CD8-positive, alpha-beta memory T cell (primary cell): ENCODE measurements at regions of chr12 and their contacts with region 1.

Region 1: GRCh38 chr12:14937689-14938088 is 648 bp downstream of the ERP27 start:
- DNase-seq: peak in 1 of 5 donors; percentile 36
- H3K4me3 ChIP-seq: no peak overlapping the region
- H3K4me3 Mint-ChIP-seq: peak overlapping the region in 1 of 7 donors; percentile 19
- H3K27ac ChIP-seq: no peak overlapping the region
- H3K27ac Mint-ChIP-seq: peak overlapping the region; percentile 43 to 97 (median 92)
- H3K4me1 ChIP-seq: peaks cover 22% of the 10 kb centered on the region
- H3K4me1 Mint-ChIP-seq: peaks cover 42 to 69% (median 60%) of the 10 kb centered on the region in 3 donors
- H3K27me3 ChIP-seq: no peaks in the 10 kb centered on the region
- H3K27me3 Mint-ChIP-seq: no peaks in the 10 kb centered on the region

Region 2: GRCh38 chr12:14473707-14474287 is 463.9 kb before region 1 on chr12:
- CTCF ChIA-PET with region 1: no interaction called
- POLR2A ChIA-PET with region 1: interaction called, 13 read pairs
- DNase-seq: peak in 2 of 5 donors; percentile 14 to 25
- H3K4me3 ChIP-seq: no peak overlapping the region
- H3K4me3 Mint-ChIP-seq: no peak overlapping the region
- H3K27ac ChIP-seq: no peak overlapping the region
- H3K27ac Mint-ChIP-seq: peak overlapping the region in 1 of 8 donors; percentile 69
- H3K4me1 ChIP-seq: no peaks in the 10 kb centered on the region
- H3K4me1 Mint-ChIP-seq: peaks cover 9 to 35% (median 13%) of the 10 kb centered on the region in 3 donors
- H3K27me3 ChIP-seq: no peaks in the 10 kb centered on the region
- H3K27me3 Mint-ChIP-seq: peaks cover 0 to 2% of the 10 kb centered on the region in 2 donors

Region 3: GRCh38 chr12:14948672-14949071 is 11.0 kb after region 1 on chr12:
- CTCF ChIA-PET with region 1: interaction called, 10 read pairs
- POLR2A ChIA-PET with region 1: interaction called, 9 read pairs
- DNase-seq: peak; percentile 32 to 81 (median 67)
- H3K4me3 ChIP-seq: peak overlapping the region; percentile 41
- H3K4me3 Mint-ChIP-seq: peak overlapping the region; percentile 72 to 87 (median 85)
- H3K27ac ChIP-seq: peak overlapping the region; percentile 9
- H3K27ac Mint-ChIP-seq: peak overlapping the region; percentile 95 to 100 (median 98)
- H3K4me1 ChIP-seq: peaks cover 94% of the 10 kb centered on the region
- H3K4me1 Mint-ChIP-seq: peaks cover 87 to 95% (median 94%) of the 10 kb centered on the region in 3 donors
- H3K27me3 ChIP-seq: no peaks in the 10 kb centered on the region
- H3K27me3 Mint-ChIP-seq: peaks cover 0 to under 1% of the 10 kb centered on the region in 2 donors

Region 4: GRCh38 chr12:14960548-14961465 is 23.1 kb after region 1 on chr12:
- CTCF ChIA-PET with region 1: interaction called, 14 read pairs
- POLR2A ChIA-PET with region 1: interaction called, 6 read pairs
- DNase-seq: peak; percentile 33 to 81 (median 72)
- H3K4me3 ChIP-seq: peak overlapping the region; percentile 94
- H3K4me3 Mint-ChIP-seq: peak overlapping the region; percentile 96 to 100 (median 98)
- H3K27ac ChIP-seq: peak overlapping the region; percentile 85
- H3K27ac Mint-ChIP-seq: peak overlapping the region; percentile 92 to 100 (median 99)
- H3K4me1 ChIP-seq: peaks cover 57% of the 10 kb centered on the region
- H3K4me1 Mint-ChIP-seq: peaks cover 61 to 80% (median 66%) of the 10 kb centered on the region in 3 donors
- H3K27me3 ChIP-seq: no peaks in the 10 kb centered on the region
- H3K27me3 Mint-ChIP-seq: peaks cover 0 to 1% of the 10 kb centered on the region in 2 donors

Region 5: DNA sequence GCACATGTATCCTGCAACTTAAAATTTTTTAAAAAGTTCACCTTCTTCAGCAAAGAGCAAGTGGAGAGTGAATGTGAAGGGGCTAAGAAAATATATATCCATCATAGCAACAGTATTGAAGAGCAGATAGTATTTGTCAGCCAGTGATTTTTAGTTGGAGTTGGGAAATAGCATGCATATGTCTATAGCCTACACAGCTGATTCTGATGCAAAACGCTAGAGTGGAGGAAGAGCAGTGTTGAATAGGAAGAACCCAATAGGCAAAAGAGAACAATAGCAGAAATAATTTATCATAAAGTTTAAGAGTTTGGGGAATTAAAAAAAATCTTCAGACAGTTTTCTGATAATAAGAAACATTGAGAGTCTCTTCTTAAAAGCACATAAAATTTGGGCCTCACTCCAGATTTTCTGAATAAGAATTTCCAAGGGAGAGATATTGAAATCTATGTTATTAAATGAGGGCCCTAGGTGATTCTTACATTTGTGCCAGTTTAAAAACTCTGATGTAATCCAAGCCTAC is 47.1 kb after region 1 on chr12:
- CTCF ChIA-PET with region 1: interaction called, 10 read pairs
- POLR2A ChIA-PET with region 1: no interaction called
- DNase-seq: no peak
- H3K4me3 ChIP-seq: no peak overlapping the region
- H3K4me3 Mint-ChIP-seq: no peak overlapping the region
- H3K27ac ChIP-seq: no peak overlapping the region
- H3K27ac Mint-ChIP-seq: peak overlapping the region in 1 of 8 donors; percentile 17
- H3K4me1 ChIP-seq: peaks cover 21% of the 10 kb centered on the region
- H3K4me1 Mint-ChIP-seq: peaks cover 32 to 54% (median 42%) of the 10 kb centered on the region in 3 donors
- H3K27me3 ChIP-seq: no peaks in the 10 kb centered on the region
- H3K27me3 Mint-ChIP-seq: no peaks in the 10 kb centered on the region

Region 6: GRCh38 chr12:14995583-14996425 is 58.1 kb after region 1 on chr12:
- CTCF ChIA-PET with region 1: interaction called, 47 read pairs
- POLR2A ChIA-PET with region 1: interaction called, 5 read pairs
- DNase-seq: peak in 2 of 5 donors; percentile 57 to 66
- H3K4me3 ChIP-seq: peak overlapping the region; percentile 2
- H3K4me3 Mint-ChIP-seq: peak overlapping the region in 2 of 7 donors; percentile 12 to 27
- H3K27ac ChIP-seq: no peak overlapping the region
- H3K27ac Mint-ChIP-seq: peak overlapping the region in 7 of 8 donors; percentile 12 to 71 (median 61)
- H3K4me1 ChIP-seq: peaks cover 24% of the 10 kb centered on the region
- H3K4me1 Mint-ChIP-seq: peaks cover 23 to 31% (median 29%) of the 10 kb centered on the region in 3 donors
- H3K27me3 ChIP-seq: no peaks in the 10 kb centered on the region
- H3K27me3 Mint-ChIP-seq: peaks cover 2 to 9% of the 10 kb centered on the region in 2 donors